ENCODE measurements at regions of chr1 and their contacts with region 1.

Region 1: DNA sequence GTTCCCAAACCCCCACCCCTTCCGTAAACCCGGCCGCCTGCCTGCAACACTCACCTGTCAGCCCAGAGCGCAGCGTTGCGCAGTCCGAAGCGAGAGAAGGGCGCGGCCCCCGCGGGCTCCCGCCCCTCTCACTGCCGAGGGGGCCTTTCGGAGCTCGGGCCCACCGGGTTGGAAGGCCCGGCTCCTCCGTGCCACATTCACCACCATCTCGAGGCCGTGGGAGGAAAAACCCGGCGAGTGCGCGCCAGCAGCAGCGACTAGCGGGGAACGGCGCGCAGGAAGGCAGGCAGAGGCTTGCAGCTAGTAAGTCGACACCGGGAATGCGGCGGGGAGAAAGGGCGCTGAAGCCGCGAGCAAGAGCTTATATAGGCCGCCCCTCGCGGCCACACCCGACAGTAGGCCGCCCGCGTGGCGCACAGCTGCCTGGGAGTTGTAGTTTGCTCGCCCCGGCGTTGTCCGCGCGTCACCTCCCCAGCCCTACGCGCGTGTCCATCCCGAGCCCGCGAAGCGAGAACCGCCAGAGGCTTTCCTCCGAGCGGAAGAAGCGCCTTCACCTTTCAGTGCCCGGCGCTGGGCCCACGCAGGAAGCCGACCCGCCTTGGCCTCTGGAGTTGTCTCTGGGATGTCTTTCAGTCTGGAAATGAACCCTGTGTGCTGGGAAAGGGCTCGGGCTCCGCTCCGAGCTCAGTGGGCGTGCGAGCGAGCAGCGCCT is 10.4 kb upstream of the RAB42 start:
- H3K4me3 ChIP-seq: peak overlapping the region; percentile 74
- H3K27ac ChIP-seq: peak overlapping the region; percentile 79
- H3K4me1 ChIP-seq: no peaks in the 10 kb centered on the region; the same call in 1 of the 2 replicates
- CTCF ChIP-seq: peak; percentile 81

Region 2: GRCh38 chr1:28329395-28330153 is 252.1 kb before region 1 on chr1:
- CTCF ChIA-PET with region 1: no interaction called
- POLR2A ChIA-PET with region 1: interaction called, 17 read pairs
- H3K4me3 ChIP-seq: peak overlapping the region; percentile 65
- H3K27ac ChIP-seq: peak overlapping the region; percentile 72
- H3K4me1 ChIP-seq: no peaks in the 10 kb centered on the region
- CTCF ChIP-seq: no peak

Region 3: GRCh38 chr1:28510665-28511440 is 70.8 kb before region 1 on chr1:
- CTCF ChIA-PET with region 1: interaction called, 4 read pairs
- POLR2A ChIA-PET with region 1: interaction called, 32 read pairs
- H3K4me3 ChIP-seq: no peak overlapping the region
- H3K27ac ChIP-seq: no peak overlapping the region
- H3K4me1 ChIP-seq: no peaks in the 10 kb centered on the region; the same call in 1 of the 2 replicates
- CTCF ChIP-seq: no peak

Region 4: DNA sequence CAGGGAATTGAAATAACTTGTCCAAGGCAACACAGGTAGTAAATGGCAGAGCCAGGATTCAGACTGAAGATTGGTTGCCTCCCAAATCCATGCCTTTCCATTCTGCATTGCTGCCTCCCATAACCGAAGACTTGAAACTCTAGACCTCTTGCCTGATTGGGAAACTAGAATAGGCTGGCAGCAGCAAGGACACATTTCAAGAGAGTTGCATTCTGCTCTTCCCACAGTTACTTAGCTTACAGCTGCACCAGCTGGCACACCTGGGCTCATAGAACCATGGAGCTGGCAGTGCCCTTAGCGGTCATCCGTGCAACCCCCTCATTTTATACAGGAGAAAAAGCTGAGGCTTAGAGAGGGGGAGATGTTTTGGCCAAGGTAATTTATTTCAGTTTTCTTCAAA is 20.8 kb before region 1 on chr1:
- CTCF ChIA-PET with region 1: interaction called, 3 read pairs
- POLR2A ChIA-PET with region 1: interaction called, 30 read pairs
- H3K4me3 ChIP-seq: no peak overlapping the region
- H3K27ac ChIP-seq: no peak overlapping the region
- H3K4me1 ChIP-seq: no peaks in the 10 kb centered on the region
- CTCF ChIP-seq: no peak

Region 5: GRCh38 chr1:28648474-28649198 is 66.9 kb after region 1 on chr1 and contains the start of gene RNU11:
- CTCF ChIA-PET with region 1: interaction called, 3 read pairs
- POLR2A ChIA-PET with region 1: interaction called, 35 read pairs
- H3K4me3 ChIP-seq: peak within 1 kb of the TSS; percentile 40
- H3K27ac ChIP-seq: peak within 1 kb of the TSS; percentile 95
- H3K4me1 ChIP-seq: no peaks in the 10 kb centered on the region
- CTCF ChIP-seq: peak; percentile 28; the same call in 1 of the 2 replicates